Head of caudate nucleus (tissue), 42 donors: ENCODE measurements at regions of chr16 and their contacts with region 1.

Region 1: DNA sequence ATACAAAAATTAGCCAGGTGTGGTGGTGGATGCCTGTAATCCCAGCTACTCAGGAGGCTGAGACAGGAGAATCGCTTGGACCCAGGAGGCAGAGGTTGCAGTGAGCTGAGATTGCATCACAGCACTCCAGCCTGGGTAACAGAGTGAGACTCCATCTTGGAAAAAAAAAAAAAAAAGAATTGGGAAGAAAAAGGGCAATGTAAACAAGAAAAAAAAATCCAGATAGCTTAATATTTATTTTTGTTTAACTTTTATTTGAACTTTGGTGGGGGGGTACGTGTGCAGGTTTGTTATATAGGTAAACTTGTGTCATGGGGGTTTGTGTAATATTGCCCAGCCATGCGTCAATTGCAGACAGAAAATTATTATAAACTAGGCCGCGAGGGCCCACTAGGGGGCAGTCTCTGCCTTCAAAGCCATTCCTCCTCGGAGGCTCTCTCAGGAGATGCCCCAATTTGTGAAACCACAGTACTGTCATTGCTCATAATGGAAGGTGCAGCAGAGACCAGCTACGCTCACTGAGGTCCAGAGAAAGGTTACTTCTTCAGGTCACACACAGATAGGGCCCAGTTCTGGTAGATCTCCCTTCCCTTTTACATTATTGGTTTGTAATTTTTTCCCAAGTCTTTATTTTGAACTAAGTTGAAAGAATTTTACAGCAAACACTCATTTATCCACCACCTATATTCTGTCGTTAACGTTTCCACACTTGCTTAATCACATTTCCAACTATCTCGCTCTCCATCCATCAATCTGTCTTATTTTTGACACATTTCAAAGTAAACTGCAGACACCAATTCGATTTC is 206.2 kb downstream of the PRKCB start:
- DNase-seq: peak; percentile 45 to 93 (median 83)

Region 2: GRCh38 chr16:23754594-23755483 is 287.2 kb before region 1 on chr16 and contains the start of gene CHP2:
- intact Hi-C with region 1: no loop called
- DNase-seq: peak in 19 of 42 donors; percentile 7 to 47 (median 24)

Region 3: DNA sequence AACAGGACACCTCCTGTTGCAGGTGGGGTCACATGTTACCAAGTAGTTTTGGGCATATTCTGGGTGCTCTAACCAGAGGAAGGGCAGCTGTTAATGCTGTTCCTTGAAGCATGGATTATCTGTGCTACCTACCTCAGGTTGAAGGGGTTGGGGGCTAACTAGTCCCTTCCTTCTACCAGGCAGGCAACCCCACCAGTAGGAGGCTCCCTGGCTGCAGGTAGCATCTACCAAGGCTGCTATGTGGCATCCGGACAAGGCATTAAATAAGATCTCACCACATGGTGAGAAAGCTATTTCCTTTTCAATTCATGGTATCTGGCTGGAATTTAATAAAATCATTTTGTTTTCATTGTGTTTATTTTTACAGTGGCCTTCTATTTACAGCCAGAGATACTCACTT is 276.6 kb after region 1 on chr16:
- intact Hi-C with region 1: no loop called
- DNase-seq: no peak

Region 4: DNA sequence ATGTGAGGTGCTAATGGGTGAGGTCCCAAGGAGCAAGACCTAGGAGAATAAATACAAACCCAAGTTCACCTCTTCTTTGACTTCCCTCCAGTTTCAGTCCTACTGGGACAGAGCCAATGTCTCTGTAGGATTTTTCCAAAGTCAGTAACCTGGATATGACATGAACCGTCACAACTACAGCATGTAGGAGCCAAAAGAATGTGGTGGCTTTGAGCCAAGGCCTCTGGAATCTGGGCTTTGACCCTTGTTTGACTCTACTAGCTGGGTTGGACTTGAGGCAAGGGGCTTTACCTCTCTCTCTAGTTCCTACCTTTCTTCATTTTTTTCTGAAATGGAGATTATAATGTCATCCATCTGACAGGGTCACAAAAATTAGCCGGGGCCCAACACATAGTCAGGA is 305.5 kb after region 1 on chr16:
- intact Hi-C with region 1: no loop called
- DNase-seq: no peak

Region 5: GRCh38 chr16:24504472-24505345 is 462.7 kb after region 1 on chr16:
- intact Hi-C with region 1: loop called (anchors 2 kb)
- DNase-seq: peak; percentile 16 to 86 (median 65)